ENCODE measurements at regions of chr1 and their contacts with region 1.

Region 1: DNA sequence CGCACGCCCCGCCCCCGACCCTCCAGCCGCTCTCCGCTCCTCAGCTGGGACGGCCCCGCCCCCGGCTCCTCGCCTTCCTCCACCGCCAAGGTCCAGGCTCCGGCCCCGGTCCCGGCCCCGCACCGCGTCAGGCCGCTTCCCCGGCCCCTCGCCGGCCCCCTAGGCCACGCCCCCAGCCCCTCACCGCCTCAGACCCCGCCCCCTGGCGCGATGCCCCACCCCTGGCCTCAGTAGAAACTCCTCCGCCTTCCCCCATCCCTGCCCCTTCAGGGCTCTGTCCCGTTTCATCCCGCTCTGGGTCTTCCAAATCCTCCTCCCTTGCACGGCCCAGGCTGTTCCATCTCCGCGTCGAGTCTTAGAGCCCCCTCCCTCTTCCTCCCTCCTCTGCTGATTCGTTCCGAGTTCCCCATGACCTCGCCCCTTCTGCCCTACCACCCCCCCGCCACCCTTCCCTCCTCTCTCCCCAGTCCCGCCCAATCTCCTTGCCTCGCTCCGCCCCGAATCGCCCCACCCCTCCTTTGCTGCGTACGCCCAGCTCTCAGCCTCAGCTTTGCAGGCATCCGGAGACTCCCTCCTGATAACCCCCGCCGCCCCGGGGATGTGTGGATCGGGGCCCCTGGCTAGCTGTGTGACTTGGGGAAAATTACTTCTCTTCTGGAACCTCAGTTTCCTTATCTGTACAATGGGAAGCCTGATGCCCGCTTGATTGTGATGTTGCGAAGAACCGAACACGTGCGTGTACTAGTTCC is 448 bp upstream of the ASAP3 start:
- DNase-seq: peak; percentile 92
- H3K4me3 ChIP-seq: peak overlapping the region; percentile 8 to 67 (median 34)
- H3K27ac ChIP-seq: no peak overlapping the region
- H3K4me1 ChIP-seq: peaks cover 11% of the 10 kb centered on the region
- H3K27me3 ChIP-seq: peaks cover 0 to 1% of the 10 kb centered on the region in 2 experiments
- CTCF ChIP-seq: no peak
- POLR2A ChIP-seq: no peak

Region 2: DNA sequence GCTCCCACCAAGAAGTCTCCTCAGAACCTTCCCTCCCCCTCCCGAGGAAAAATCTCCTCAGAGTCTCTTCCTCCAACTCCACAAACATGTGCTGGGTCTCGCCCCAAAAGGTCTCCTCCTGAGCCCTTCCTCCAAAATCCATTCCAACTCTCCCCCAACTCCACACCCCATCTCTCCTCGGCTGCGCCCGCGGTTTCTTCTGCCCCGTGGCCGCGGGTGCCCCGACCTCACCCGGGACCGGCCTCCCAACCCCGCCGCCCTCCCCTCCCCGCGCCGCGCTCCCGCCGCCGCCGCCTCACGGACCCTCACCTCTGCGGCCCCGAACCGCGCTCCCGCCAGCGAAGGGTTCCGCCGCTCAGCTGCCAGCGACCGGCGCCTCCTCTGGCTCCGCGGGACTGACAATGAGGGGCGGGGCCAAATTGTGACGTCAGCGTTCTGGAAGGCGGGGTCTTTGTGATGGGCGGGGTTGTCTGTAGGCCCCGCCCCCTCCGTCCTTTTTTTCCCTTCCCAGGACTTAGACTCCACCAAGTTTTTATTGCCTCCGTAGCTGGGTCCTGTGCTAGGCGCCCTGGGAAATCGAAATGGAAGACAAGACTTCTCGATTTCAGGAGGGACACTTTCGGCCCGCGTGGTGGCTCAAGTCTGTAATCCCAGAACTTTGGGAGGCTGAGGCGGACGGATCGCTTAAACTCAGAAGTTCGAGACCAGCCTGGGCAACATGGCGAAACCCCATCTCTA is 315.8 kb before region 1 on chr1 and contains the start of gene LUZP1:
- CTCF ChIA-PET with region 1: no interaction called
- POLR2A ChIA-PET with region 1: no interaction called
- dilution Hi-C with region 1: no loop called
- intact Hi-C with region 1: loop called (anchors 1 kb)
- DNase-seq: peak; percentile 93
- H3K4me3 ChIP-seq: peak within 1 kb of the TSS; percentile 84 to 95 (median 93)
- H3K27ac ChIP-seq: peak within 1 kb of the TSS; percentile 77
- H3K4me1 ChIP-seq: peaks cover 32% of the 10 kb centered on the region
- H3K27me3 ChIP-seq: no peaks in the 10 kb centered on the region
- CTCF ChIP-seq: peak in 1 of 2 donors; percentile 7
- POLR2A ChIP-seq: peak; percentile 88
- total RNA-seq, gene LUZP1: 82.4 and 92.3 TPM in 2 replicates

Region 3: GRCh38 chr1:23344111-23344986 is 140.1 kb before region 1 on chr1 and contains the start of gene HNRNPR:
- CTCF ChIA-PET with region 1: interaction called, 11 read pairs
- POLR2A ChIA-PET with region 1: no interaction called
- dilution Hi-C with region 1: no loop called
- intact Hi-C with region 1: loop called (anchors 2 kb)
- DNase-seq: peak; percentile 100
- H3K4me3 ChIP-seq: peak within 1 kb of the TSS; percentile 73 to 99 (median 99)
- H3K27ac ChIP-seq: peak within 1 kb of the TSS; percentile 79
- H3K4me1 ChIP-seq: peaks cover 27% of the 10 kb centered on the region
- H3K27me3 ChIP-seq: no peaks in the 10 kb centered on the region
- CTCF ChIP-seq: no peak
- POLR2A ChIP-seq: peak; percentile 87
- total RNA-seq, gene HNRNPR: 165 and 171 TPM in 2 replicates

Region 4: GRCh38 chr1:23367791-23368561 is 116.5 kb before region 1 on chr1:
- CTCF ChIA-PET with region 1: interaction called, 6 read pairs
- POLR2A ChIA-PET with region 1: interaction called, 4 read pairs
- dilution Hi-C with region 1: no loop called
- intact Hi-C with region 1: loop called (anchors 2 kb)
- DNase-seq: peak; percentile 99
- H3K4me3 ChIP-seq: peak overlapping the region; percentile 47 to 93 (median 70)
- H3K27ac ChIP-seq: peak overlapping the region; percentile 82
- H3K4me1 ChIP-seq: peaks cover 32% of the 10 kb centered on the region
- H3K27me3 ChIP-seq: no peaks in the 10 kb centered on the region
- CTCF ChIP-seq: no peak
- POLR2A ChIP-seq: no peak

Region 5: DNA sequence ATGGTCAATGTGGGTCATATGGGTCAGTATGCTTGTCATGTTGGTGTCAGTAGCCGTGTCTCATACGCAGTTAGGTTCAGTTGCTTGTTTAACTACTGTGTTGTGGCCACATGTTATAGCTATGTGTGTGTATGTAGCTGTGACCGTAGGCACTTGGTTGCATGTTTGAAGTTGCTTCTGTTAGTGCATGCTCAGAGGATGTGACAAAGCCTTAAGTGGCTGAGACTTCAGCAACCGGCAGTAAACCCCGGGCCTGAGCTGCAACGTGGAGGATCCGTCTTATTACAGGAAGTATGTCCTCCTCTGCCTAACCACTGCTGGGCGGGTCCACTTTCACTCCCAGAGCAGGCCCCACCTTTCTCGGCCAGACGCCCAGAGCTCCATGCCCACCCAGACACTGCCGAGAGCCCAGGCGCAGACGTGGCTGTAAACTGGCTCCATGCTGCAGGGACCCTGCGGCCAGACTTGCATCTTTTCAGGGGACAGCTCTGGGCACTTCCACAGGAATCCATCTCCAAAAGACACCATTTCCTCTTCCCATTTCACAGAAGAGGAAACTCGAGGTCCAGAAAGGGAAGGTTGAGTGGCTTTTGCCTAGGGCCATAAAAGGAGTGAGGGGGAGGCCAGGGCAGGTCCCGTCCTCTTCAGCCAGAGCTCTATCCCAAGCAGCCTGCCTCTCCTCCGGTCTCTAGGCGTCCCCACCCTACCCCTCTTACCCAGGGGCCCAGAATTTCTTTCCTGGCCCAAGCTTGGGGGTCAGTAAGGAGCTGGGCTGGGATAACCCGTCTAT is 62.0 kb before region 1 on chr1:
- CTCF ChIA-PET with region 1: interaction called, 8 read pairs
- POLR2A ChIA-PET with region 1: interaction called, 7 read pairs
- dilution Hi-C with region 1: no loop called
- intact Hi-C with region 1: loop called (anchors 1 kb)
- DNase-seq: peak; percentile 50
- H3K4me3 ChIP-seq: no peak overlapping the region
- H3K27ac ChIP-seq: no peak overlapping the region
- H3K4me1 ChIP-seq: peaks cover 12% of the 10 kb centered on the region
- H3K27me3 ChIP-seq: peaks cover 0 to 10% of the 10 kb centered on the region in 2 experiments
- CTCF ChIP-seq: no peak
- POLR2A ChIP-seq: no peak

Region 6: DNA sequence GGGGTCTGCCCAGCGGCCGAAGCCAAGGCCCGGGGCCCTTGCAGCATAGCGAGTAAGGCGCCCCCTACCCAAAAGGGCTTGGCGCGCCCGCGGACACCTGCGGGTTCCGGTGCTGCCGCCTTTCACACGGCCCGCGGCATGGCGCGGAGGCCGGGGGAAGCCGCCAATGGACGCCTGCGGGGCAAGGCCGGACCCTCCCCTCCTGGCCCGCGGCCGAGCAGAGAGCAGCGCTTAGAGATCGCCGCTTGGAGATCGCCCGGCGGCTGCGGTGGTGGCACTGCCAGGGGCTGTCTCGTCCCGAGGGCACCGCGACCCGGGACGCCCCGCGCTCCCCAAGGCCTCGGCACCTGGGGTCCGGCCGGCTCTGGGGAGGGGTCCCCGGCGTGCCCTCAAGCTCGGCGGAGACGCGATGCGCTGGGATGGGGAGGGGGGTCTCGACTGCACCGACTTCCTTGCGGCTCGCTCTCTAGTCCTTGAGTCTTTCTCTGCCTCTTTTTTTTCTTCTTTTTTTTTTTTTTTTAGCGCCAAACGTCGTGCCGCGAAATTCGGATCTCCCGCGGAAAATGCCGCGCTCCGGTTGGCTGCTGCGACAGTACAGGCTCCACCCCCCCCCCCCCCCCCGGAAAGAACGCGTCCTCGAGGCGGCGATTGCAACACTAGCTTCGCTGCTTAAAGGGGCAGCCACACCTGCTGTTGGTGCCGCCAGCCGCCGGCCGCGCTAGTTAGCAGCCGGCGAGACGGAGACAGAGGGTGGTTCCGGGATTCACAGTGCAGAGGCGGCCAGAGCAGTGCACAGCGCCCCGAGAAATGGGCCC is 46.5 kb after region 1 on chr1 and contains the start of gene E2F2:
- CTCF ChIA-PET with region 1: interaction called, 5 read pairs
- POLR2A ChIA-PET with region 1: no interaction called
- dilution Hi-C with region 1: no loop called
- intact Hi-C with region 1: loop called (anchors 5 kb)
- DNase-seq: peak; percentile 74
- H3K4me3 ChIP-seq: peak within 1 kb of the TSS; percentile 38 to 74 (median 68)
- H3K27ac ChIP-seq: peak within 1 kb of the TSS; percentile 73
- H3K4me1 ChIP-seq: peaks cover 35% of the 10 kb centered on the region
- H3K27me3 ChIP-seq: no peaks in the 10 kb centered on the region
- CTCF ChIP-seq: peak in 1 of 2 donors; percentile 18
- POLR2A ChIP-seq: no peak
- total RNA-seq, gene E2F2: 5.0 and 5.6 TPM in 2 replicates

Measured in endothelial cell of umbilical vein (primary cell).